Stomach (tissue), 19 donors: ENCODE measurements at regions of chr2 and their contacts with region 1.

Region 1: GRCh38 chr2:73176881-73177644 is 25.3 kb upstream of the NOTO start:
- DNase-seq: peak; percentile 93 to 97
- H3K4me3 ChIP-seq: peak overlapping the region; percentile 55 to 61 (median 56)
- H3K27ac ChIP-seq: peak overlapping the region; percentile 26 to 81 (median 78)
- H3K4me1 ChIP-seq: peaks cover 20 to 32% (median 30%) of the 10 kb centered on the region in 4 donors
- H3K27me3 ChIP-seq: peaks cover 0 to 78% (median 16%) of the 10 kb centered on the region in 3 donors
- CTCF ChIP-seq: peak in 5 of 7 experiments; percentile 93 to 99 (median 98)
- EP300 ChIP-seq: no peak
- POLR2A ChIP-seq: no peak

Region 2: GRCh38 chr2:72892506-72893173 is 284.4 kb before region 1 on chr2:
- intact Hi-C with region 1: loop called (anchors 10 kb)
- DNase-seq: peak; percentile 80 to 91
- H3K4me3 ChIP-seq: no peak overlapping the region
- H3K27ac ChIP-seq: no peak overlapping the region
- H3K4me1 ChIP-seq: peaks cover 8 to 48% (median 45%) of the 10 kb centered on the region in 4 donors
- H3K27me3 ChIP-seq: peaks cover 4 to 30% (median 20%) of the 10 kb centered on the region in 3 donors
- CTCF ChIP-seq: peak in 5 of 7 experiments; percentile 56 to 74 (median 73)
- EP300 ChIP-seq: no peak
- POLR2A ChIP-seq: no peak

Region 3: DNA sequence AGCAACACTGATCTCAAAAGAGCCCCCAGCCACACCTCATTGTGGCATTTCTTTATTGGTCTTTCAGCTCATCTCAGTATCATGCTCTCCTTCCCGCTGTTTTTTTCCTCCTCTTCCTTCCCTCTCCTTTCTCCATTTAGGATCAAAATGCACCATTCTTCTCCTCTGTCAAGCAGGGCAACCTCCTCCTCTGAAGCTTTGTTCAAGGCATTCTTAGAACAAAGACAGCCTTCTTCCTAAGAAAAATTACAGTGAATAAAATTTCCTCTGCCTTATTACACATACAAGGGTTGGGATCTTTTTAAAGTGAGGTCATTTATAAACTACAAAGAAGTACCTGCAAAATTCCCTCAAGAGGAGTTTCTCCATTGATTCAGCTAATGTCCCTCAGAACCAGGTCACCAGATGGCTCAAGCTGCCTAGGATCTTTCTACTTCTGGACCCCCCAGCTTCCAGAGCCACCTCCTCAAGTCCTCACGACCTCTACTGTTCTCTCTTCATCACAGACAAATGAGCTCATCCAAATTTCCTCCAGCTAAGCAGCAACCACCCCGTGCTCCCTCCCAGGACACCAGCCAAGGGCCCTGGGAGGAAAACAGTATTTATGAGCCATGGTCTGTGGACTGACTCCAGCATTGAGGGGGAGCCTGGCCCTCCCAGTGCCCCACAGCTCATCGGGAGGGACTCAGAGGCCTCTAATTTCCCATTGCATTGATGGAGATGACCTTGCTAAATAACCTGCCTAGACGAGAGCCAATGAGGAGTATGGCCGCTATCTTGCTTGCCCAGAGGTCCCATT is 123.5 kb before region 1 on chr2:
- intact Hi-C with region 1: no loop called
- DNase-seq: no peak
- H3K4me3 ChIP-seq: no peak overlapping the region
- H3K27ac ChIP-seq: no peak overlapping the region
- H3K4me1 ChIP-seq: no peaks in the 10 kb centered on the region
- H3K27me3 ChIP-seq: no peaks in the 10 kb centered on the region
- CTCF ChIP-seq: no peak
- EP300 ChIP-seq: no peak
- POLR2A ChIP-seq: no peak